ENCODE measurements at regions of chr4 and their contacts with region 1.

Region 1: DNA sequence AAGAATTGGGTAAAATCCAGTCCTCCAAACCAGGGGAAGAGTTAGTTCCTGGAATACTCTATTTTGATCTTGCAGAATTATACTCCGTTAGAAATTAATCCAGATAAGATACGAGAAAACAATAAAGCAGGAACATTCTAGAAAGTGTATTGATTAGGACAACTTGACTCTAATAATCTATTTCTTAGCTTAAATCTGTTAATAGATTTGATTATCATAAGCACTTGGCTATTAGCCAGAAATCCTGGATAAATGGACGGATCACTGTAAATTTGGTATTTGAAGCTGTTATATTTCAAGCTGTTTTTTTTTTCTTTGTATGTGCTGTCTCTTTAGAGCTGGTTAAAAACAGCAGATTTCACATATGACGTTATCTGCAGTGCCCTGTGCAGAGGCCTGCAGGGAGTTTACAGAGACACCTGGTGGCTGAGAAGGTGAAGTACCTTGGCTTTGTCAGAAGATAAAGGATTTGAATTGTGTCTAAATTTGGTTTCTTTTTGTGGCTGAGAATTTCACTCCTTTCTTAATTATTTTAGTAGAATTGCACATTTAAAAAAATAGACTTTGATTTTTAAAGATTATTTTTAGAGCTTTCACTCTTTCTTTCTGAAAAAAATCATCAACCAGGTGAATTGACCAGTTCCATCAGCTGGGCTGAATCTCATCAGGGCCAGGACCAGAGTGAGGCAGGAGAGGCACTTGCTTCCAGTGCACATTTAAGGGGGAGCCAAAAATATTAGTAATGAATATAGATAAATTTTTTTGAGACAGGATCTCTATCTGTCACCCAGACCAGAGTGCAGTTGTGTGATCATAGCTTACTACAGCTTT is 9.7 kb upstream of the CHRNA9 start:
- DNase-seq: peak; percentile 75 to 83 (median 79)
- H3K4me3 ChIP-seq: no peak overlapping the region
- H3K4me3 Mint-ChIP-seq: no peak overlapping the region
- H3K27ac ChIP-seq: no peak overlapping the region
- H3K27ac Mint-ChIP-seq: peak overlapping the region in 5 of 7 donors; percentile 2 to 80 (median 48)
- H3K4me1 ChIP-seq: peaks cover 5% of the 10 kb centered on the region
- H3K4me1 Mint-ChIP-seq: peaks cover 5 to 17% (median 6%) of the 10 kb centered on the region in 4 donors
- H3K27me3 ChIP-seq: no peaks in the 10 kb centered on the region
- H3K27me3 Mint-ChIP-seq: peaks cover 0 to 6% of the 10 kb centered on the region in 2 donors

Region 2: DNA sequence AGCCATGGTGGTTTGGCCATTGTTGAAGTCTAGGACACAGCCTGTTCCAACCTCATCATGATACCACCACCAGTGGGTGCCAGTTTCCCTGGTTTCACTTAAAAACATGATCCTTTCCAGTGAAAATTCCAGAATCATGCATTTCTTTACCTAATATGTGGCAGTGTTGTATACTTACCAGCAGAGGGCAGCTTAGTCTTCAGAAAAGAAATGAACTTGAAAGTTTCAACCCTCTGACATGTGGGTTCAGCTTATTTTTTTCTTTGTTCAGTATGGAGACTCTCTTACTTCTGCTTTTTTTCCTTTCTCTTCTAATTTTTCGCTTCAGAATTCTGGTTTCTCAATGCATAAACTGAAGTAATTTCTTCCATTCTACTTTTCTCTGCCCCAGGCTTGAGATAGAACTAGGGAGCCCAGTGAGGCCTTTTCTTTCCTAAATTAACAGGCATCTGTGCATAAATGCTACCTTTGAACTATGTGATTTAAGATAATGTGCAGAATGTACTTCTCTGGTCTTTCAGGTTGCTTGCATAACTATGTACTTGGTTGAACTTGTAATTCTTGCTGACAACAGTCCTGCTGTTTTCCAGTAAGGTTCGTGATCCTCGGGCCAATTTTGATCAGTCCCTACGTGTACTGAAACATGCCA is 855.9 kb before region 1 on chr4:
- CTCF ChIA-PET with region 1: interaction called, 3 read pairs
- POLR2A ChIA-PET with region 1: no interaction called
- intact Hi-C with region 1: loop called (anchors 1 kb)
- DNase-seq: peak in 4 of 5 donors; percentile 45 to 58 (median 50)
- H3K4me3 ChIP-seq: no peak overlapping the region
- H3K4me3 Mint-ChIP-seq: no peak overlapping the region
- H3K27ac ChIP-seq: no peak overlapping the region
- H3K27ac Mint-ChIP-seq: peak overlapping the region in 3 of 7 donors; percentile 11 to 29 (median 22)
- H3K4me1 ChIP-seq: no peaks in the 10 kb centered on the region
- H3K4me1 Mint-ChIP-seq: peaks cover 0 to 1% (median 0%) of the 10 kb centered on the region in 4 donors
- H3K27me3 ChIP-seq: no peaks in the 10 kb centered on the region
- H3K27me3 Mint-ChIP-seq: no peaks in the 10 kb centered on the region

Region 3: DNA sequence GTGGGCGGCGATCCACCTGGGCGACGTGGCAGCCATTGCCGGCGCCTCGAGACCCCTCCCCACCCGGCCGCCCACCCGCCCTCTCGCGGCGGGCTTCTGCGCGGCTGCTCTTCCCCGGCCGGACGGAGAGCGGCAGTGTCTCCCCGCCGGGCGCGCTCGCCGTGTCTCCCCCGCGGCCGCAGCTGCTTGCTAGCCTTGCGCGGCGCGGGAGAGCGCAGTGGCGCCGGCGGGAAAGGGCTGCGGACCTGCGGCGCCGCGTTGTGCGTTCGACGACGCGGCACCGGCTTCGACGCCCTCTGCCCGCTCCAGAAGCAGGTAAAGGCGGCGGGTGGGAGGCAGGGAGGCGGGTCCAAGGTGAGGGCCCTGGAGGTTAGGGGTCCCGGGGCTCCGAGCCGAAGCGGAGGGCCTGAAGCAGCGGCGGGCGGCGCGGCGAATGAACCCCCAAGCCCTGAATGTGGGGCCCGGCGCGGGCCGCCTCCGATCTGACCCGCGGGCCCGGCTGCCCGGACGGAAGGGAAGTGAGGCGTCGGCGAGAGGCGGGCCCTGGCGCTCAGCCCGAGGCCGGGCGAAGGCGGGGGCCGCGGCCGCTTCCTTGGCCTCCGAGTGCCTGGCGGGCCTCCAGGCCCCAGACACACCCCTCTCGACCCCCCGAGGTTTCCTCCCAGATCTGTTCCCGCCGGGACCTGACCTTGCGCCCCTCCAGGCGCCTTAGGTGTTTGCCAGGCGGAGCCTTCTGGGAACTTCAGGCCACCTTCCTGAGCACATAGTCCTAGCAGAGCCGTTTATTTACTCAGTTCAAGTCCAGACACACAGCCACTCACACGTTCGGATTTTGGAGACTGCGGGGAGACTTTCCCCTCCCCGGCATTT is 268.5 kb before region 1 on chr4 and contains the start of gene N4BP2:
- CTCF ChIA-PET with region 1: interaction called, 60 read pairs
- POLR2A ChIA-PET with region 1: interaction called, 21 read pairs
- intact Hi-C with region 1: loop called (anchors 1 kb)
- DNase-seq: peak; percentile 60 to 78 (median 75)
- H3K4me3 ChIP-seq: peak within 1 kb of the TSS; percentile 82 to 100
- H3K4me3 Mint-ChIP-seq: peak within 1 kb of the TSS; percentile 93 to 99 (median 97)
- H3K27ac ChIP-seq: peak within 1 kb of the TSS; percentile 75
- H3K27ac Mint-ChIP-seq: peak within 1 kb of the TSS; percentile 93 to 99 (median 97)
- H3K4me1 ChIP-seq: peaks cover 36% of the 10 kb centered on the region
- H3K4me1 Mint-ChIP-seq: peaks cover 18 to 48% (median 32%) of the 10 kb centered on the region in 4 donors
- H3K27me3 ChIP-seq: no peaks in the 10 kb centered on the region
- H3K27me3 Mint-ChIP-seq: no peaks in the 10 kb centered on the region
- total RNA-seq, gene N4BP2: 15.0 to 16.7 TPM

Region 4: DNA sequence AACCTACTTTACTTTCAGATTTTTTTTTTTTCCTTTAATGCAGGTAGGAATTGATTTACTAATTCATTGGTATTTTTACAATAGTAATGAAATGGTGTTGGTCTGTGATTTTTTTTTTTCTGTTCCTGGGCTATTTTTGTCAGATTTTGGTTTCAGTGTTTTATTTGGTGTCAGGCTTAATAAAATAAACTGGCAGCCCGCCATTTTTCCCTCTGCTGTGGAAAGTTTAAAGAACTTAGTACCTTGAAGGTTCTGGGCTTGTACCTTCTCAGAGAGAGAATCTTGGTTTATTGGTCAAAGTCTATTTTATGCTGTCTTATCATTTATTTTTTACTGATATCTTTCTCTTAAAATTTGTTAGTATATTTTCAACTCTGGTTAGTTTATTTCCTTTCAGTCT is 192.6 kb before region 1 on chr4:
- CTCF ChIA-PET with region 1: interaction called, 10 read pairs
- POLR2A ChIA-PET with region 1: interaction called, 3 read pairs
- intact Hi-C with region 1: no loop called
- DNase-seq: no peak
- H3K4me3 ChIP-seq: no peak overlapping the region
- H3K4me3 Mint-ChIP-seq: no peak overlapping the region
- H3K27ac ChIP-seq: no peak overlapping the region
- H3K27ac Mint-ChIP-seq: peak overlapping the region in 1 of 7 donors; percentile 3
- H3K4me1 ChIP-seq: no peaks in the 10 kb centered on the region
- H3K4me1 Mint-ChIP-seq: peaks cover 0 to 5% (median 3%) of the 10 kb centered on the region in 4 donors
- H3K27me3 ChIP-seq: no peaks in the 10 kb centered on the region
- H3K27me3 Mint-ChIP-seq: no peaks in the 10 kb centered on the region

Region 5: GRCh38 chr4:40149960-40150385 is 175.4 kb before region 1 on chr4:
- CTCF ChIA-PET with region 1: interaction called, 153 read pairs
- POLR2A ChIA-PET with region 1: interaction called, 3 read pairs
- intact Hi-C with region 1: loop called (anchors 1 kb)
- DNase-seq: peak; percentile 75 to 81 (median 77)
- H3K4me3 ChIP-seq: no peak overlapping the region
- H3K4me3 Mint-ChIP-seq: peak overlapping the region in 2 of 8 donors; percentile 44 to 65
- H3K27ac ChIP-seq: no peak overlapping the region
- H3K27ac Mint-ChIP-seq: peak overlapping the region; percentile 27 to 91 (median 77)
- H3K4me1 ChIP-seq: peaks cover 22% of the 10 kb centered on the region
- H3K4me1 Mint-ChIP-seq: peaks cover 20 to 34% (median 25%) of the 10 kb centered on the region in 4 donors
- H3K27me3 ChIP-seq: no peaks in the 10 kb centered on the region
- H3K27me3 Mint-ChIP-seq: no peaks in the 10 kb centered on the region

Region 6: DNA sequence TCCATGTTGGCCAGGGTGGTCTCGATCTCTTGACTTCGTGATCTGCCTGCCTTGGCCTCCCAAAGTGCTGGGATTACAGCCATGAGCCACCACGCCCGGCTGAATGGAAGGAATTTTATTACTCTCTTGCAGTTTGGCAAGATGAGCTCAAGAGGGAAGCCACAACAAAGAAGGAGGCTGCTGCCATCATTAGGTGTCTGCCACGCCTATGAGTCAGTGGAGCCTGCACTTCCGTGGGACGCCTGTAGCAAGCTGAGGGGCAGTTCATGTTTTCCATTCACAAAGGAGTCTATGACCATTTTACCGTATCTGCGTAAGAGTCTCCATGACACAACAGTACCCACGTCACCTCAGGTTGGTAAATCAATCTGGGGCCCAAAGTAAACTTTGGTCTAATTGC is 41.4 kb before region 1 on chr4:
- CTCF ChIA-PET with region 1: interaction called, 23 read pairs
- POLR2A ChIA-PET with region 1: interaction called, 5 read pairs
- intact Hi-C with region 1: no loop called
- DNase-seq: peak; percentile 71 to 97 (median 86)
- H3K4me3 ChIP-seq: no peak overlapping the region
- H3K4me3 Mint-ChIP-seq: peak overlapping the region in 7 of 8 donors; percentile 70 to 86 (median 79)
- H3K27ac ChIP-seq: peak overlapping the region; percentile 49
- H3K27ac Mint-ChIP-seq: peak overlapping the region; percentile 92 to 98 (median 96)
- H3K4me1 ChIP-seq: peaks cover 39% of the 10 kb centered on the region
- H3K4me1 Mint-ChIP-seq: peaks cover 34 to 73% (median 55%) of the 10 kb centered on the region in 4 donors
- H3K27me3 ChIP-seq: no peaks in the 10 kb centered on the region
- H3K27me3 Mint-ChIP-seq: peaks cover 0 to 2% of the 10 kb centered on the region in 2 donors

Region 7: DNA sequence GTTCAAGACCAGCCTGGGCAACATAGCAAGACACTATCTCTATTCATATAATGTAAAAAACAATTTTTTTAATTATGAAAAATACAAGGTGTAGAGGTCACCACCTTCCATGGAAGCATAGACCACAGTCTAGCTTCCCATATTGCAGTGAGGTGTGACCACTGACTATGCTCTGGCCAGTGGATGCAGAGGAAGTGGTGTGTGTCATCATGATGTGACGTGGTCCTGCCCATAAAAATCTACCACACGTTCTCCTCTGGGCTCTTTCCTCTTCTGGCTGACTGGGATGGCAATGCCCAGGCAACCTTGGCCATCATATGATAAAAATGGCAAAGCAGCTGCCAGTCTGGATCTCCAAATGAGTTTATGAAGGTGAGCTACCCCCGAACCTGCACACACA is 238.6 kb after region 1 on chr4:
- CTCF ChIA-PET with region 1: no interaction called
- POLR2A ChIA-PET with region 1: no interaction called
- intact Hi-C with region 1: no loop called
- DNase-seq: no peak
- H3K4me3 ChIP-seq: no peak overlapping the region
- H3K4me3 Mint-ChIP-seq: no peak overlapping the region
- H3K27ac ChIP-seq: no peak overlapping the region
- H3K27ac Mint-ChIP-seq: no peak overlapping the region
- H3K4me1 ChIP-seq: no peaks in the 10 kb centered on the region
- H3K4me1 Mint-ChIP-seq: peaks cover 0 to 3% (median 0%) of the 10 kb centered on the region in 4 donors
- H3K27me3 ChIP-seq: no peaks in the 10 kb centered on the region
- H3K27me3 Mint-ChIP-seq: peaks cover 0 to 4% of the 10 kb centered on the region in 2 donors

Measured in CD4-positive, alpha-beta memory T cell (primary cell).